B cell (primary cell): ENCODE measurements at regions of chr3 and their contacts with region 1.

Region 1: GRCh38 chr3:180912304-180913296 is at the start of gene FXR1:
- DNase-seq: peak; percentile 95
- ATAC-seq: peak; percentile 90
- H3K4me3 ChIP-seq: peak within 1 kb of the TSS; percentile 67 to 99 (median 92)
- H3K4me3 Mint-ChIP-seq: peak within 1 kb of the TSS; percentile 95
- H3K27ac ChIP-seq: peak within 1 kb of the TSS; percentile 91 to 97
- H3K27ac Mint-ChIP-seq: peak within 1 kb of the TSS; percentile 97
- H3K4me1 ChIP-seq: peaks cover 22 to 27% of the 10 kb centered on the region in 2 donors
- H3K4me1 Mint-ChIP-seq: peaks cover 53% of the 10 kb centered on the region
- H3K27me3 ChIP-seq: no peaks in the 10 kb centered on the region
- H3K27me3 Mint-ChIP-seq: no peaks in the 10 kb centered on the region
- CTCF ChIP-seq: peak; percentile 72
- total RNA-seq, gene FXR1: 143 and 144 TPM in 2 replicates

Region 2: DNA sequence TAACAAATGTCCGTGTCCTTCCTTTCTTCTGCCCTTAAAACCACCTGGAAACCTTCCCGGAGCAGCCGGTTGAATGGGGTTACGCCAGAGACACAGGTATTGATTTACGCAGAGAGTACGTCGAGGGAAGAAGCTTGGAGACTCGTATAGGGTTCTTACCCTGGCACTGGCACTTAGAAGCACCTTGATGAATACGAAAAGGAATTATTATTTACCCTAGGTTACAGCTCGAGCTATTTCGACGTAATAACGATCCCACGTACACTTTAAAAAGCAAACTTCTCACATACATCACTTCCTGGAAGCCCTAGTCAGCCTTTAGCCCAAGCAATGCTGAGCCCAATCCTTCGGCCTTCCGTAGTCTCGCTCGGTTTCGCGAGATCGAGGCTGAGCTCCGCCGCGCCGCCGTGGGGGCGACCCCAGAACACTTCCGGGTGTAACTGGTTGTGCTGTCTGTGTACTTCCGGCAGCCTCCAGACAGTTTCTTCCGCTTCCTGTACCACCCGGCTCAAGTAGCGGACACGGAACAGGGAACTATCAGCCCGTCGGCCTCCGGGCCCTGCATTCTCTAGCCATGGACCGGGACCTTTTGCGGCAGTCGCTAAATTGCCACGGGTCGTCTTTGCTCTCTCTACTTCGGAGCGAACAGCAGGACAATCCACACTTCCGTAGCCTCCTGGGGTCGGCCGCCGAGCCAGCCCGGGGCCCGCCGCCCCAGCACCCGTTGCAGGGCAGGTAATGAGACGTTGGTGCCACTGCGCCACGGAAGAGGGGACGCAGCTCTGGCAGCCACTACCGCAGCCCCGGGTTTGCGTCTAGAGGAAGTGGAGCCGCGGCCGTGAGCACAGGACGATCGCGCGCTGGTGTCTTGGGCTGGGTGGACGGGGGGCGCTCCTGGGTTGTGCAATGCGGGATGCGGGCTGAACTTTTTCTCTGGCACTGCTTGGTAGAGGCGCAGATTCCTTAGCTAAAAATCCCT is 310.6 kb before region 1 on chr3 and contains the start of gene TTC14:
- CTCF ChIA-PET with region 1: interaction called, 7 read pairs
- POLR2A ChIA-PET with region 1: no interaction called
- intact Hi-C with region 1: loop called (anchors 1 kb)
- DNase-seq: peak; percentile 96
- ATAC-seq: peak; percentile 88
- H3K4me3 ChIP-seq: peak within 1 kb of the TSS; percentile 75 to 86 (median 80)
- H3K4me3 Mint-ChIP-seq: peak within 1 kb of the TSS; percentile 93
- H3K27ac ChIP-seq: peak within 1 kb of the TSS; percentile 88 to 90
- H3K27ac Mint-ChIP-seq: peak within 1 kb of the TSS; percentile 98
- H3K4me1 ChIP-seq: peaks cover 12 to 17% of the 10 kb centered on the region in 2 donors
- H3K4me1 Mint-ChIP-seq: peaks cover 25% of the 10 kb centered on the region
- H3K27me3 ChIP-seq: peaks cover 0 to 4% (median 0%) of the 10 kb centered on the region in 4 experiments
- H3K27me3 Mint-ChIP-seq: peaks cover 24% of the 10 kb centered on the region
- CTCF ChIP-seq: no peak
- total RNA-seq, gene TTC14: 136 and 139 TPM in 2 replicates

Region 3: DNA sequence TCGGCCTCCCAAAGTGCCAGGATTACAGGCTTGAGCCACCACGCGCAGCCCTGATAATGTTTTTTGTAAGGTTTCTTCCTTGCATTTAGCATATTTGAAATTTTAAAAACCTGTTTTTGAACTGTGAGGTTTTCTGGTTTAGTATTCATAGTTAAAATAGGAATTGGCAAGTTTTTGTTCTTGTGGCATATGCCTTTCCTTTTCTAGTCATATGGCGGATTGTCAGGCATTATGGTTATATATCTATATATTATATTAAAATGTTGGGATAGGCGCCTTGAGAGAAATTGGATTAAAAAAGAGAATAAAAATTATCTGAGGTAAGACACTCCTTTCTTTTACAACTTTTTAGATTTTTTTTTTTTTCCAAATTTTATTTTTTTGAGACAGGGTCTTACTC is 28.2 kb after region 1 on chr3:
- CTCF ChIA-PET with region 1: interaction called, 4 read pairs
- POLR2A ChIA-PET with region 1: interaction called, 11 read pairs
- intact Hi-C with region 1: no loop called
- DNase-seq: no peak
- ATAC-seq: no peak
- H3K4me3 ChIP-seq: no peak overlapping the region
- H3K4me3 Mint-ChIP-seq: no peak overlapping the region
- H3K27ac ChIP-seq: no peak overlapping the region
- H3K27ac Mint-ChIP-seq: no peak overlapping the region
- H3K4me1 ChIP-seq: no peaks in the 10 kb centered on the region
- H3K4me1 Mint-ChIP-seq: peaks cover 7% of the 10 kb centered on the region
- H3K27me3 ChIP-seq: no peaks in the 10 kb centered on the region
- H3K27me3 Mint-ChIP-seq: no peaks in the 10 kb centered on the region
- CTCF ChIP-seq: no peak